ENCODE measurements at regions of chr17 and their contacts with region 1.

Region 1: GRCh38 chr17:37592291-37592690 is 16.9 kb downstream of the SYNRG start:
- DNase-seq: no peak
- ATAC-seq: no peak
- H3K4me3 ChIP-seq: no peak overlapping the region
- H3K4me3 Mint-ChIP-seq: no peak overlapping the region
- H3K27ac ChIP-seq: no peak overlapping the region
- H3K27ac Mint-ChIP-seq: no peak overlapping the region
- H3K4me1 ChIP-seq: peaks cover 31% of the 10 kb centered on the region
- H3K4me1 Mint-ChIP-seq: peaks cover 72% of the 10 kb centered on the region
- H3K27me3 ChIP-seq: no peaks in the 10 kb centered on the region
- H3K27me3 Mint-ChIP-seq: no peaks in the 10 kb centered on the region
- CTCF ChIP-seq: no peak

Region 2: DNA sequence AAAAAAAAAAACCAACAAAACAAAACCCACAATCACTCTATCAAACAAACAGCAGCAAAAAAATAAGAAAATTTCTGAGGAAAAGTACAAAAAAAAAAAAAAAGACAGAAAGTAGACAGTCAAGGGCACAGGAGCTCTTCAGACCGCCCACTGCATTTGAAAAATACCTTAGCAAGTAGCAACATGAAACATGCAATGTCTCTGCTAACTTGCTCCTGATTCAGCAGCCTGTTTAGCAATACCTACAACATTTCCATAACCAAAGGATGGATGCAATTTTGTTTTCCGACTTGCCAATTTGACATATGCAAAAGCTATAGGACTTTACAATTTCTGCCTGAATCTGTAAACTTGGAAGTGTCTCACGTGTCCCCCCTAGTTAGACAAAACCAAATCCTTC is 40.5 kb before region 1 on chr17:
- CTCF ChIA-PET with region 1: no interaction called
- POLR2A ChIA-PET with region 1: interaction called, 4 read pairs
- intact Hi-C with region 1: loop called in 1 of 2 experiments (anchors 5 kb)
- DNase-seq: no peak
- ATAC-seq: no peak
- H3K4me3 ChIP-seq: no peak overlapping the region
- H3K4me3 Mint-ChIP-seq: peak overlapping the region; percentile 26
- H3K27ac ChIP-seq: no peak overlapping the region
- H3K27ac Mint-ChIP-seq: peak overlapping the region; percentile 85
- H3K4me1 ChIP-seq: peaks cover 58% of the 10 kb centered on the region
- H3K4me1 Mint-ChIP-seq: peaks cover 70% of the 10 kb centered on the region
- H3K27me3 ChIP-seq: no peaks in the 10 kb centered on the region
- H3K27me3 Mint-ChIP-seq: no peaks in the 10 kb centered on the region
- CTCF ChIP-seq: no peak

Region 3: GRCh38 chr17:37570527-37571093 is 21.7 kb before region 1 on chr17:
- CTCF ChIA-PET with region 1: interaction called, 3 read pairs
- POLR2A ChIA-PET with region 1: no interaction called
- intact Hi-C with region 1: loop called in 1 of 2 experiments (anchors 2 kb)
- DNase-seq: peak in 6 of 9 experiments; percentile 3 to 44 (median 28)
- ATAC-seq: peak; percentile 54
- H3K4me3 ChIP-seq: no peak overlapping the region
- H3K4me3 Mint-ChIP-seq: no peak overlapping the region
- H3K27ac ChIP-seq: no peak overlapping the region
- H3K27ac Mint-ChIP-seq: no peak overlapping the region
- H3K4me1 ChIP-seq: no peaks in the 10 kb centered on the region
- H3K4me1 Mint-ChIP-seq: peaks cover 17% of the 10 kb centered on the region
- H3K27me3 ChIP-seq: no peaks in the 10 kb centered on the region
- H3K27me3 Mint-ChIP-seq: no peaks in the 10 kb centered on the region
- CTCF ChIP-seq: no peak

Measured in CD8-positive, alpha-beta T cell (primary cell).